ENCODE measurements at regions of chr7 and their contacts with region 1.

Region 1: DNA sequence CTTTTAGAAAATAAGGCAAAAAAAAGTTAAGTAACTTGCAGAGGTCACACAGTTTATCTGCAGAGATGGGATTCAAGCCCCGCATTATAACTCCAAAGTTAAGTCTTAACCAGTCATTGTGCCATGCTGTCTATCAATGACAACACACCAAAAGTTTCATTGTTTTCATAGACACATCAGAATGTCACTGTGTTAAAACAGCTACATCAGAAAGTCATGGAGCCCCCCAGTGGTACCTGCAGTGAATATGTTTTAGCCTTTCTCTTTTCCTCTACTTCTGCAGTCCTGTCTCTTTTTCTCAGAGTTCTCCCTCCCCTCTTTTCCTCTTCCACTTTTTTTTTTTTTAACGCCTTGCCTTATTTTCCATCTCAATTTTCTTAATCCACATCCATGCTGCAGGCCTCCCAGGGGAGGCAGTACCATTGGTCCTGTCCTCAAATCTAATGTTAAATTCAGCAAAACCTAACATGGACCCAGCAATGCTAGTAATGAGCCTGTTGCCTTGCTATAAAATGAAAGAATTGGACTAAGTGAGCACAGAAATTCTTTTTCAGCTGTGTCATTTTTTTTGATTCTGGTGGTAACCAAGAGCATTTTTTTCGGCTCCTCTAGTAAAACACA is 3.8 kb upstream of the NRCAM start:
- DNase-seq: no peak
- ATAC-seq: peak; percentile 61 to 80 (median 70)
- H3K4me3 ChIP-seq: no peak overlapping the region
- H3K27ac ChIP-seq: no peak overlapping the region
- H3K4me1 ChIP-seq: peaks cover 0 to 8% (median 0%) of the 10 kb centered on the region in 4 donors
- H3K27me3 ChIP-seq: peaks cover 0 to 19% of the 10 kb centered on the region in 2 donors
- CTCF ChIP-seq: peak; percentile 41 to 59 (median 47)
- POLR2A ChIP-seq: no peak

Region 2: GRCh38 chr7:108181073-108181985 is 278.7 kb before region 1 on chr7:
- intact Hi-C with region 1: loop called in 1 of 2 experiments (anchors 10 kb)
- DNase-seq: no peak
- ATAC-seq: peak; percentile 75 to 90 (median 84)
- H3K4me3 ChIP-seq: no peak overlapping the region
- H3K27ac ChIP-seq: no peak overlapping the region
- H3K4me1 ChIP-seq: no peaks in the 10 kb centered on the region
- H3K27me3 ChIP-seq: no peaks in the 10 kb centered on the region
- CTCF ChIP-seq: peak; percentile 65 to 83 (median 72)
- POLR2A ChIP-seq: no peak

Region 3: DNA sequence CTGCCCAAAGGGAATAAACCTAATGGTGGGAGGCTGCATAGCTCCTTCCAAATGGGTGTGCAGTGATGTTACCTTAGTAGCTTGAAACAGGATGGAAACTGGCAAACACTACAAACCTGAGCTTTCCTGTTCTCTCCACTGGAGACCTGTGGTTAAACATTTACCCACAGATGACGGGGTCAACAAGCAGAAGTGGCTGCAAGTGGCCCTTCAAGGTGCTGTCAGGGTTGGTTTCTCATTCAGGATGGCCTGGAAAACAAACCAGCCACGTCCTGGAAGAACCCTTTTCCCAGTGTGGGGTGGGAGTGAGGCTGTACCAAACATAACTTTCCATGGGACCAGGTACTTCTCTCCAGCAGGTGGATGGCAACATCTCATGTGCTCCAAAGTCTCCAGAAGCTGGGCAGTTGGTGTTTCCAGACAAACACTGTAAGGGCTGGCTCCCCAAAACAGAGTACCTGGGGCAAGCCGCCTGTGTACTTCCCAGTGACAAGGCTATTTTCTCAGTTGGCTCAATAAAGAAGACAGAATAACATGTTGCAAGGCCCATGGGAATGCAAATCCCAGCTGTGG is 177.1 kb after region 1 on chr7:
- intact Hi-C with region 1: no loop called
- DNase-seq: peak in 1 of 3 donors; percentile 56
- ATAC-seq: peak; percentile 95 to 98 (median 97)
- H3K4me3 ChIP-seq: no peak overlapping the region
- H3K27ac ChIP-seq: peak overlapping the region in 1 of 3 donors; percentile 49
- H3K4me1 ChIP-seq: peaks cover 0 to 11% (median 4%) of the 10 kb centered on the region in 4 donors
- H3K27me3 ChIP-seq: no peaks in the 10 kb centered on the region
- CTCF ChIP-seq: no peak
- POLR2A ChIP-seq: no peak